Heart right ventricle (tissue), 16 donors: ENCODE measurements at regions of chr13 and their contacts with region 1.

Region 1: DNA sequence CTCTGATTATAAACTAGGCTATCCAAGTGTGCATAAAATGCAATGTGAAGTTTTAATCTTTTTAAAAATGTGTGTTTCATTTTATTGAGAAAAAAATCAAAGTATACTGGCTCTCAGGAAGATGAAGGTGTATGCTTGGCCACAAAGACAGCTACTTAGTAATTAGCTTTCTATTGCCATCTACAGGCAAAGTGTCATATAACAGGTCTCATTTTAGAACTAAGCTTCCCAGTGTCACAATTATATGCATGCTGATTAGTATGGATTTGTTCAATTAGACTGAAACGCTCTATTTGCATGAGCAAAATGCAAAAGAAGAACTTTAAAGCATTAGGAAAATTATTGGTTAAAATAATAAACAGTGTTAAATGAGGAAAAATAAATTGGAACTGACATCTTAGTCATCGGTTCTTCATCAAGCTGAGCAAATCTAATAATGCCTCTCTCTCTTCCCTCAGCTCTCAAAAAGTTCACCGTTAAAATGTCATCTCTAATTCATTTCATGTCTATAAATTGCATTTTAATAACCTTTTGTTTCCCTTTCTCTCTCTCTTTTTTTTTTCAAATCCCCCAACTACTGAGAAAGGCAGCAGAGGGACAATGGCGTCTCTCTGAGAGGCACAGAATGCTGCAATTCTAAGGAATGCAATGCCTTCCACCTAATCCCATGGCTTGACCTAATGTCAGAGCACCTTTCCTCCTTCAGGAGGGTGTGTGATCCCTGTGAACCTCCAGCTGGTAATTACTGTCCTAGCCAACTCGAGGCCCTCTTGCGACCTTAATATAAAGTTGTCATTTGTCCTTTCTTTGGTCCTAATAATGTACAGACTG is 313.1 kb upstream of the MAB21L1 start:
- DNase-seq: no peak
- ATAC-seq: peak in 4 of 8 donors; percentile 51 to 67 (median 55)
- H3K4me3 ChIP-seq: no peak overlapping the region
- H3K27ac ChIP-seq: no peak overlapping the region
- H3K4me1 ChIP-seq: no peaks in the 10 kb centered on the region
- H3K27me3 ChIP-seq: no peaks in the 10 kb centered on the region
- CTCF ChIP-seq: peak in 8 of 9 donors; percentile 41 to 74 (median 66)

Region 2: GRCh38 chr13:35210261-35210660 is 579.3 kb before region 1 on chr13:
- intact Hi-C with region 1: loop called in 1 of 10 experiments (anchors 10 kb)
- DNase-seq: no peak
- ATAC-seq: no peak
- H3K4me3 ChIP-seq: no peak overlapping the region
- H3K27ac ChIP-seq: no peak overlapping the region
- H3K4me1 ChIP-seq: peaks cover 0 to 7% (median 0%) of the 10 kb centered on the region in 9 donors
- H3K27me3 ChIP-seq: no peaks in the 10 kb centered on the region
- CTCF ChIP-seq: peak in 5 of 9 donors; percentile 8 to 31 (median 24)

Region 3: DNA sequence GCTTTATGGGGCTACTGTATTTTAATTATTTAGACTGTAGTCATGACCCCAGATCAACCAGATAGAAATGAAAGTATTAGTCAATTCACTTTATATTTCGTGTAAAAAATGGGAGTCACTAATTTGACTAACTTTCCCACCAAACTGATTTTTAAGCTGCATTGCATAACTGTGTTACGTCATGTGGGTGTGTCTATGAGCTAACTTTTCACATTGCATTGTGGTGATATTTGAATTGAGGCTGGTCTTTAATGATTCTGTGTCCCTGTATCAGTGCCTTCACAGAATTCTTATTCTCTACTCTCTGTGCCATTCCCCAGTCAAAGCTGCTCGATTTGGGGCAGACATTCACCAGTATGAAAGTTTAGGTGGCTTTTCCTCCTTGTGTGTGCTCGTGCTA is 140.4 kb before region 1 on chr13:
- intact Hi-C with region 1: loop called in 1 of 10 experiments (anchors 10 kb)
- DNase-seq: no peak
- ATAC-seq: peak in 1 of 8 donors; percentile 41
- H3K4me3 ChIP-seq: no peak overlapping the region
- H3K27ac ChIP-seq: no peak overlapping the region
- H3K4me1 ChIP-seq: peaks cover 0 to 9% (median 0%) of the 10 kb centered on the region in 9 donors
- H3K27me3 ChIP-seq: no peaks in the 10 kb centered on the region
- CTCF ChIP-seq: no peak

Region 4: GRCh38 chr13:35720690-35721554 is 68.6 kb before region 1 on chr13:
- intact Hi-C with region 1: loop called in 3 of 10 experiments (anchors 2 to 5 kb)
- DNase-seq: peak; percentile 35 to 56
- ATAC-seq: peak in 4 of 8 donors; percentile 25 to 57 (median 42)
- H3K4me3 ChIP-seq: peak overlapping the region in 5 of 10 donors; percentile 7 to 20 (median 13)
- H3K27ac ChIP-seq: peak overlapping the region in 3 of 10 donors; percentile 13 to 40 (median 26)
- H3K4me1 ChIP-seq: peaks cover 3 to 46% (median 34%) of the 10 kb centered on the region in 9 donors
- H3K27me3 ChIP-seq: no peaks in the 10 kb centered on the region
- CTCF ChIP-seq: peak; percentile 76 to 92 (median 87)

Region 5: GRCh38 chr13:35841060-35841521 is 51.5 kb after region 1 on chr13:
- intact Hi-C with region 1: no loop called
- DNase-seq: no peak
- ATAC-seq: peak in 2 of 8 donors; percentile 30 to 65
- H3K4me3 ChIP-seq: no peak overlapping the region
- H3K27ac ChIP-seq: peak overlapping the region in 2 of 10 donors; percentile 3 to 77
- H3K4me1 ChIP-seq: peaks cover 0 to 24% (median 0%) of the 10 kb centered on the region in 9 donors
- H3K27me3 ChIP-seq: no peaks in the 10 kb centered on the region
- CTCF ChIP-seq: no peak